ENCODE measurements at regions of chr7 and their contacts with region 1.

Region 1: GRCh38 chr7:92134271-92135051 is at the start of gene CYP51A1:
- DNase-seq: peak; percentile 95 to 97 (median 96)
- ATAC-seq: peak; percentile 91
- H3K4me3 ChIP-seq: peak within 1 kb of the TSS; percentile 95
- H3K27ac ChIP-seq: peak within 1 kb of the TSS; percentile 99
- H3K4me1 ChIP-seq: peaks cover 19 to 20% of the 10 kb centered on the region in 2 experiments; a peak in 3 of 5 replicates
- H3K27me3 ChIP-seq: no peaks in the 10 kb centered on the region
- CTCF ChIP-seq: peak in 2 of 3 experiments; percentile 7; a peak in 2 of 6 replicates
- EP300 ChIP-seq: peak; percentile 51; the same call in 1 of the 2 replicates
- POLR2A ChIP-seq: peak; percentile 93
- RAD21 ChIP-seq: no peak; a peak in 2 of 4 replicates
- polyA plus RNA-seq, gene CYP51A1: 41.8 to 42.2 TPM

Region 2: GRCh38 chr7:92119213-92119759 is 15.2 kb before region 1 on chr7:
- CTCF ChIA-PET with region 1: no interaction called
- POLR2A ChIA-PET with region 1: interaction called, 16 read pairs
- in situ Hi-C with region 1: no loop called
- intact Hi-C with region 1: no loop called
- DNase-seq: no peak
- ATAC-seq: no peak
- H3K4me3 ChIP-seq: no peak overlapping the region
- H3K27ac ChIP-seq: no peak overlapping the region
- H3K4me1 ChIP-seq: no peaks in the 10 kb centered on the region
- H3K27me3 ChIP-seq: no peaks in the 10 kb centered on the region
- CTCF ChIP-seq: no peak
- EP300 ChIP-seq: no peak
- POLR2A ChIP-seq: no peak
- RAD21 ChIP-seq: no peak

Region 3: DNA sequence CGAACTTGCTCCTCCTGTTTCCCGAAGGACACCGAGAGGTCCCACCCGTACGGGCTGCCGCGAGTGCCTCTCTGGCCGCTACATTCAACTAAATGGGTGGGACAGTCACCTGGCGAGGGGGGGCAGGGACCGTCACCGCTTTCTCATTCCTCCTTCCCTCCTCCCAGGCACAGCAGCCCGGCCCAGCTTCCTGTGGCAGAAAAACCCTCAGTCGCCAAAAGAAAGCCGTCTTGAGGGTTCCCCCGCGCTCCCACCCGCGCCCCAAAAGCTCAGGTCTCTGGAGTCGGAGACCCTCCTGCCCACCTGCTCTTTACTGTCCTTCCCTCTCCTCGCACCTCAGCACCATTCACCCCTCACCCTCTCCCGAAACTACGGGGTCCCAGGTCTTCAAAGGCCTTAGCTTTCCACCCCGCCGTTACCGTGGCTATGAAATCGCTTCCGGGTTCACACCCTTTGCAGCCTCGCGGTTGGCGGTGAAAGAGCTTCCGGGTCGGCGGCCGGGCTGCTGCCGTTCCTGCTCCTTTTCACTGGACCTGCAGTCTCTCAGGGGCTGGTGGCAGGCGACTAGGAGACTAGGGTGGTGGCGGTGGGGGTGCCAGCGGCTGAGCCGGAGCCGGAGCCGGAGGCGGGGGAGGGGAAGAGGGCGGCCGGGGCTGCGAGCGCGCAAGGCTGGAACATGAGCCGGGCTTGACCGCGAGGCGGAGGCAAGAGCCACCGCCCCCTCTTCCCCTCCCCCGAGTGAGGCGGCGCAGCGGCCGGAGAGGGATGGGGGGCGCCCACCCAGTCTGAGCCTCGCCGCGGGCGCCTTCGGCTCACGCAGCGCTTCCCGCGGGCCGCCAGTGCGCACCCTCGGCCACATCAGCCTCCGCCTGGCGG is 111.3 kb after region 1 on chr7 and contains the starts of genes ANKIB1 and KRIT1:
- CTCF ChIA-PET with region 1: interaction called, 3 read pairs
- POLR2A ChIA-PET with region 1: interaction called, 9 read pairs
- in situ Hi-C with region 1: no loop called
- intact Hi-C with region 1: loop called (anchors 2 kb)
- DNase-seq: peak; percentile 90 to 95 (median 94)
- ATAC-seq: peak; percentile 87
- H3K4me3 ChIP-seq: peak within 1 kb of the TSS; percentile 59
- H3K27ac ChIP-seq: peak within 1 kb of the TSS; percentile 92
- H3K4me1 ChIP-seq: peaks cover 0 to 8% of the 10 kb centered on the region in 2 experiments; a peak in 3 of 5 replicates
- H3K27me3 ChIP-seq: no peaks in the 10 kb centered on the region
- CTCF ChIP-seq: peak in 2 of 3 experiments; percentile 15 to 43; a peak in 2 of 6 replicates
- EP300 ChIP-seq: no peak
- POLR2A ChIP-seq: peak; percentile 98
- RAD21 ChIP-seq: peak in 1 of 2 experiments; percentile 14; a peak in 2 of 4 replicates
- polyA plus RNA-seq, gene ANKIB1: 5.9 to 7.4 TPM
- polyA plus RNA-seq, gene KRIT1: 21.5 to 21.7 TPM

Region 4: DNA sequence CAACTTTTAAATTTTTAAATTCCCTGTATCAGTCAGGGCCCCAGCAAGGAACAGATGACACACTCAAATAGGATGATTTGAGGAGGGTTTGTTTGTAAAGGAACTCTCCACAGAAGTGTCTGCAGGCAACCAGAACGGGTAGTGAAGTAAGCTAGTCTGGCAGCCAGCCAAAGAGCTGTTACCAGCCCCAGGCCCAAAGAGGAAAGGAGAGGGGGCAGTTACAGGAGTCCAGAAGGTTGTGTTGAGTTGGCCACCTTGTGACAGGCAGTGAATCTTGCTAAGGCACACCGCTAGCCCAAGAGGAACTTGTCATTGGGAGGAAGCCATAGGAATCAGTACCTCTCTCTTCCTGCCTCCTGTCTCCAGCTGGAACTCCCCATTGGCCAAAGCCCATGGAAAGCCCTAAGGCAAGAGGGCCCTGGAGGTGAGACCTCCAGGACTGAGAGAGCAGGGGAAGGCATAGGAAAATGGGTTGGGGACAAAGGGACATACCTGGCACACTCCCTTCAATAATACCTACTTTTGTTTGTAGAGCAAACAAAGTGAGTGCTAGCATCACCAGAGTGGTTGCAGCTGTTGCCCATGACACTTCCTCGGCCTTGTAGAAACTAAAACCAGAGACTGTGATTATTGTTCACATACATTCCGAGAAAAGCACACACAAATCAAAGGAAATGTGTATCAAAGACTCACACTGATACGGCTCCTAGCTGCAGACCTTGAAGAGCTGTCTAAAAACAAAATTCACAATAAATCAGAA is 287.4 kb after region 1 on chr7:
- CTCF ChIA-PET with region 1: no interaction called
- POLR2A ChIA-PET with region 1: interaction called, 6 read pairs
- in situ Hi-C with region 1: no loop called
- intact Hi-C with region 1: loop called (anchors 5 kb)
- DNase-seq: peak in 3 of 4 experiments; percentile 26 to 59 (median 33)
- ATAC-seq: no peak
- H3K4me3 ChIP-seq: no peak overlapping the region
- H3K27ac ChIP-seq: no peak overlapping the region
- H3K4me1 ChIP-seq: peaks cover 14 to 20% of the 10 kb centered on the region in 2 experiments
- H3K27me3 ChIP-seq: no peaks in the 10 kb centered on the region
- CTCF ChIP-seq: no peak
- EP300 ChIP-seq: no peak
- POLR2A ChIP-seq: no peak
- RAD21 ChIP-seq: no peak

Region 5: DNA sequence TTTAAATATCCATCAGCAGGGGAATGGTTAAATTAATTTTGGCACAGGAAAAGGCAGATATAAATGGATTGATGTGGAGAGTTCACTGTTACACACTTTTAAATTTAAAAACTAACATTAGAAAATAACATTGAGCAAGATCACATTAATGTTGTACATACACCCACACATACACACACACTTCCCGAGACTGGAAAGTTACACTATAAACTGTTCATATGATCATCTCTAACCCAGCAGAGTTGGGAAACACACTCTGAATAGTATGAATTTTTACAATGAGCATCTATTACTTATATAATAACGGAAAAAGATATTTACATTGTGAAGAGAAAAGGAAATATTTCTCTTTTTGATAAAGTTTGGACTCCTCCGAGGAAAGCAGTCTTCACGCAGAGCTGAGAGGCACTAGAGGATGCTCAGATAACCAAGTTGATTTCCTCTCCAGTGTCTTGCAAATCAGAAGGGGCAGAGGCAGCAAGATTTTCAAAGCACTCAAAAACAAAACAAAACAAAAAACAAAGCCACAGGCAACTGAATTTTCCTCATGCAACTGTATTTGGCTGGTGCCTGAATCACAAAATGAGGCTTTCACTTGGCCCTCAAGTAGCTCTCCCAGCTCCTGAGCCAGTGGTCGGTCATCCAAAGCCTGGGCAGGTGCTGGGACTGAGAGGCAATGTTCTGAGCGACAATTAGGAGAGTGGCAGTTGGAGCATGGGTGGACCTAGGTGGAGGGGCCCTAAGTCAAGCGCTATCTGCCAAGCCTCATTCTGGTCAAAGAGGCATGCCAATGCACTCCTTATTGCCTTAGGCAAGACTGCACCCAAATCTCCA is 302.4 kb after region 1 on chr7:
- CTCF ChIA-PET with region 1: no interaction called
- POLR2A ChIA-PET with region 1: no interaction called
- in situ Hi-C with region 1: loop called (anchors 10 kb)
- intact Hi-C with region 1: no loop called
- DNase-seq: no peak
- ATAC-seq: peak; percentile 36
- H3K4me3 ChIP-seq: no peak overlapping the region
- H3K27ac ChIP-seq: no peak overlapping the region
- H3K4me1 ChIP-seq: no peaks in the 10 kb centered on the region; a peak in 2 of 5 replicates
- H3K27me3 ChIP-seq: no peaks in the 10 kb centered on the region
- CTCF ChIP-seq: no peak
- EP300 ChIP-seq: no peak
- POLR2A ChIP-seq: no peak
- RAD21 ChIP-seq: no peak

Measured in K562 (cell line).